ENCODE measurements at regions of chr19 and their contacts with region 1.

Region 1: DNA sequence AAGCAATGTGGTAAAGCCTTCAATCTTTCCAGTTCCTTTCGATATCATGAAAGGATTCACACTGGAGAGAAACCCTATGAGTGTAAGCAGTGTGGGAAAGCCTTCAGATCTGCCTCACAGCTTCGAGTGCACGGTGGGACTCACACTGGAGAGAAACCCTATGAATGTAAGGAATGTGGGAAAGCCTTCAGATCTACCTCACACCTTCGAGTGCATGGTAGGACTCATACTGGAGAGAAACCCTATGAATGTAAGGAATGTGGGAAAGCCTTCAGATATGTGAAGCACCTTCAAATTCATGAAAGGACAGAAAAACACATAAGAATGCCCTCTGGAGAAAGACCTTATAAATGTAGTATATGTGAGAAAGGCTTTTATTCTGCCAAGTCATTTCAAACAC is 15.6 kb upstream of the ZNF763 start:
- DNase-seq: peak in 3 of 5 donors; percentile 4 to 8 (median 5)
- H3K4me3 ChIP-seq: peak overlapping the region in 1 of 2 donors; percentile 27
- H3K4me3 Mint-ChIP-seq: peak overlapping the region in 1 of 8 donors; percentile 27
- H3K27ac ChIP-seq: no peak overlapping the region
- H3K27ac Mint-ChIP-seq: peak overlapping the region in 2 of 7 donors; percentile 23 to 65
- H3K4me1 ChIP-seq: no peaks in the 10 kb centered on the region
- H3K4me1 Mint-ChIP-seq: no peaks in the 10 kb centered on the region
- H3K27me3 ChIP-seq: no peaks in the 10 kb centered on the region
- H3K27me3 Mint-ChIP-seq: no peaks in the 10 kb centered on the region

Region 2: DNA sequence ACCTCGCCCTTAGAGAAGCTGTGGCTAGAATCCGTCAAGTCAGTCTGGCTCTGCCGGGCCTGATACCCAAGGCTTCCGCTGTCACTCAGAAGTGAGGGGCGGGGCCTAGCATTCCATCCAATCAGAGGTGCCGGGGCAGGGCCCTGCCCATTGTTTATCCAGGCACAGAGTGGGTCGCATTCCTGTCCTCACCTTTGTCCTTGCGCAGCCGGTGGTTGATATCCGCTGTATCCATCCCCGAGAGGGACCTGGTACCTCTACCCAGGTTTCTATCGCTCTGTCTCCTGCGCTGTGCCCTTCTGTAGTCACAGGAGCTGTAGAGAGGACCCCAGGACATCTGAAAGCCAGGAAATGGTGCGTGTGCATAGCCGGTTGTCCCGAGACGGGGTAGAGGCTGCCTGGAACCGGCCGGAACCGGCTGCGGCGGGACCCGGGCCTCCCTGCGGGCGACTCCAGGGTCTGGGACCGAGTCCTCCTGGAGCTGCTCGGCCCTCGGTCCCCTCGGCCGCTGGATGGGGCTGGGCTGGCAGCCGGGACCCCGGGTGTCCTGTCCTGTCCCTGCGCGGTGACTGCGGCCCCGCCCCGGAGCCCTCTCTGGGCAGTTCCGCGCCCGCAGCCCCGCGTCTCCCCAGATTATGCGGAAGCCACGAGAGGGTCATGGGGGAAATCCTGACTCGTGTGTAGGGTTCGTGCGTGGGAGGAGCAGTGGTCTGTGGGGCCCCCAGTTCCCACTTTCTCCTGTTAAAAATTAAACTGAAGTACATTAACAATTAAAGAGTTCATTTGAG is 15.9 kb after region 1 on chr19 and contains the start of gene ZNF763:
- CTCF ChIA-PET with region 1: interaction called, 11 read pairs
- POLR2A ChIA-PET with region 1: interaction called, 4 read pairs
- intact Hi-C with region 1: no loop called
- DNase-seq: peak; percentile 83 to 93 (median 85)
- H3K4me3 ChIP-seq: peak within 1 kb of the TSS; percentile 79 to 86
- H3K4me3 Mint-ChIP-seq: peak within 1 kb of the TSS; percentile 93 to 98 (median 96)
- H3K27ac ChIP-seq: peak within 1 kb of the TSS; percentile 91
- H3K27ac Mint-ChIP-seq: peak within 1 kb of the TSS; percentile 92 to 97 (median 96)
- H3K4me1 ChIP-seq: peaks cover 21% of the 10 kb centered on the region
- H3K4me1 Mint-ChIP-seq: peaks cover 16 to 32% (median 26%) of the 10 kb centered on the region in 4 donors
- H3K27me3 ChIP-seq: no peaks in the 10 kb centered on the region
- H3K27me3 Mint-ChIP-seq: no peaks in the 10 kb centered on the region
- total RNA-seq, gene ZNF763: 14.3 to 16.4 TPM

Measured in CD4-positive, alpha-beta memory T cell (primary cell).